Activated CD4-positive, alpha-beta memory T cell treated with anti-CD3 and anti-CD28 coated beads for 36 hours (primary cell): ENCODE measurements at regions of chr15 and their contacts with region 1.

Region 1: DNA sequence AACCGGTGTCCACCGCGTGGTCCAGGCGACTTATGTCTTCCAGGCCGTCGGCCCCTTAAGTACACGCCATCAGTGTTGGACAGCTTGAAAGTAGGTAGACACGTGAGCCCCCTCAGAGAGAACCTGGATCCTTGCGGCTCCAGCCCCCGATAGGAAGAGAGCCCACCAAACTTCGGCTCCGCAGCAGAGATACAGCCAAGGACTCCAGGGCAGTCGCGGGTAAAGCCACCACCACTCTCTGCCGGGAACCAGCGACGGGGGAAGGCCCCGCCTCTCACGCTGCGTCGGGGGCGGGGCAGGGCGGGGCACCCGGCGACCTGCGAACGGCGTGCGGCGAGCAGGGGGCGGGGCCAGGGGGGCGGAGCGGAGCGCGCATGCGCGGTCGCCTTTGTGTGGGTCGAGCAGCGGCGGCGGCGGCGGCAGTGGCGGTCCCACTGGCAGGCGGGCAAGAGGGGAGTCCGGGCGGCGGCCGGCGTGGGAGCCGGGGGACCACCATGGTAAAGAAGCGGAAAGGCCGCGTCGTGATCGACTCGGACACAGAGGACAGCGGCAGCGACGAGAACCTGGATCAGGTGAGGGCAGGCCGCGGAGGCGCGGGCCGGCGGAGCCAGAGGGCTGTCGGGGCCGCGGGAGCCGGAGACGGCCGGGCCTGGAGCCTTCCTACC is at the start of gene RTF1:
- DNase-seq: peak; percentile 98
- H3K4me3 Mint-ChIP-seq: peak within 1 kb of the TSS; percentile 88
- H3K27ac Mint-ChIP-seq: peak within 1 kb of the TSS; percentile 83
- H3K4me1 Mint-ChIP-seq: peaks cover 40% of the 10 kb centered on the region
- H3K27me3 Mint-ChIP-seq: no peaks in the 10 kb centered on the region
- total RNA-seq, gene RTF1: 24.9 to 26.2 TPM

Region 2: GRCh38 chr15:41331833-41332787 is 84.8 kb before region 1 on chr15 and contains the start of gene OIP5:
- CTCF ChIA-PET with region 1: no interaction called
- POLR2A ChIA-PET with region 1: no interaction called
- intact Hi-C with region 1: loop called (anchors 1 kb)
- DNase-seq: peak; percentile 99
- H3K4me3 Mint-ChIP-seq: peak within 1 kb of the TSS; percentile 99
- H3K27ac Mint-ChIP-seq: peak within 1 kb of the TSS; percentile 97
- H3K4me1 Mint-ChIP-seq: peaks cover 23% of the 10 kb centered on the region
- H3K27me3 Mint-ChIP-seq: no peaks in the 10 kb centered on the region
- total RNA-seq, gene OIP5: 11.1 to 13.0 TPM